Left cardiac atrium (tissue), 4 donors: ENCODE measurements at regions of chr6 and their contacts with region 1.

Region 1: GRCh38 chr6:31908791-31909190 is 6.9 kb upstream of the ZBTB12 start:
- DNase-seq: no peak
- ATAC-seq: no peak

Region 2: DNA sequence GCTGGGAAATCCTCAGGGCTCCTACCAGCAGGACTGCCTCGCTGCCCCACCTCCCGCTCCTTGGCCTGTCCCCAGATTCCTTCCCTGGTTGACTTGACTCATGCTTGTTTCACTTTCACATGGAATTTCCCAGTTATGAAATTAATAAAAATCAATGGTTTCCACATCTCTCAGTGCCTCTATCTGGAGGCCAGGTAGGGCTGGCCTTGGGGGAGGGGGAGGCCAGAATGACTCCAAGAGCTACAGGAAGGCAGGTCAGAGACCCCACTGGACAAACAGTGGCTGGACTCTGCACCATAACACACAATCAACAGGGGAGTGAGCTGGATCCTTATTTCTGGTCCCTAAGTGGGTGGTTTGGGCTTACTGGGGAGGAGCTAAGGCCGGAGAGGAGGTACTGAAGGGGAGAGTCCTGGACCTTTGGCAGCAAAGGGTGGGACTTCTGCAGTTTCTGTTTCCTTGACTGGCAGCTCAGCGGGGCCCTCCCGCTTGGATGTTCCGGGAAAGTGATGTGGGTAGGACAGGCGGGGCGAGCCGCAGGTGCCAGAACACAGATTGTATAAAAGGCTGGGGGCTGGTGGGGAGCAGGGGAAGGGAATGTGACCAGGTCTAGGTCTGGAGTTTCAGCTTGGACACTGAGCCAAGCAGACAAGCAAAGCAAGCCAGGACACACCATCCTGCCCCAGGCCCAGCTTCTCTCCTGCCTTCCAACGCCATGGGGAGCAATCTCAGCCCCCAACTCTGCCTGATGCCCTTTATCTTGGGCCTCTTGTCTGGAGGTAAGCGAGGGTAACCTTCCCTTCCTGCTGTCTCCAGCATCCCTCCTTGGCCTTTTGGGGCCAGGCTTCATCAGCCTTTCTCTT is 36.9 kb after region 1 on chr6 and contains the start of gene CFB:
- intact Hi-C with region 1: loop called in 1 of 2 experiments (anchors 5 kb)
- DNase-seq: peak; percentile 84
- ATAC-seq: peak; percentile 84 to 89
- total RNA-seq, gene CFB: 50.3 to 113 TPM